ENCODE measurements at regions of chr1 and their contacts with region 1.

Region 1: GRCh38 chr1:21669258-21670058 is at the start of gene RAP1GAP:
- DNase-seq: no peak
- total RNA-seq, gene RAP1GAP: 0.38 to 1.2 TPM

Region 2: GRCh38 chr1:21508580-21509350 is 160.7 kb before region 1 on chr1:
- intact Hi-C with region 1: loop called in 1 of 2 experiments (anchors 10 kb)
- DNase-seq: peak; percentile 90

Region 3: GRCh38 chr1:21607549-21608529 is 61.6 kb before region 1 on chr1:
- intact Hi-C with region 1: no loop called
- DNase-seq: peak; percentile 95

Region 4: DNA sequence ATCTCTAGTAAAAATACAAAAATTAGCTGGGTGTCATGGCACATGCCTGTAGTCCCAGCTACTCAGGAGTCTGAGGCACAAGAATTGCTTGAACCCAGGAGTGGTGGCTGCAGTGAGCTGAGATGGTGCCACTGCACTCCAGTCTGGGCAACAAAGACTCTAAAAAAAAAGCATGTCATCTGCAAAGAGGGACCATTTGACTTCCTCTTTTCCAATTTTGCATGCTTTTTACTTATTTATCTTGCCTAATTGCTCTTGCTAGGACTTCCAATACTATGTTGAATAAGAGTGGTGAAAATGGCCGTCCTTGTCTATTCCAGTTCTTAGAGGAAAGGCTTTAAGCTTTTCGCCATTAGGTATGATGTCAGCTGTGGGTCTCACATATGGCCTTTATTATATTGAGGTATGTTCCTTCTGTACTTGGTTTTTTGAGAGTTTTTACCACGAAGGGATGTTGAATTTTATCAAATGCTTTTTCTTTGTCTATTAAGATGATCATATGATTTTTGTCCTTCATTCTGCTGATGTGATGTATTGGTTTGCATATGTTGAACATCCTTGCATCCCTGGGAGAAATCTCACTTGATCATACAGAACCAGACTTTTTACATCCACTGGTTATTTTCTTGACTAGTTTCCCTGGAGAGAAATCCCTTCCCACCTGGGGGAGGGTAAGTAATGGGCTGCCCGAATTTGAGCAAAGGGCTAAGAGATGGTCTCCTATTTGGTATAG is 16.7 kb after region 1 on chr1:
- intact Hi-C with region 1: no loop called
- DNase-seq: no peak

Measured in posterior vena cava (tissue), 2 donors.